HepG2 (cell line): ENCODE measurements at regions of chr19 and their contacts with region 1.

Region 1: DNA sequence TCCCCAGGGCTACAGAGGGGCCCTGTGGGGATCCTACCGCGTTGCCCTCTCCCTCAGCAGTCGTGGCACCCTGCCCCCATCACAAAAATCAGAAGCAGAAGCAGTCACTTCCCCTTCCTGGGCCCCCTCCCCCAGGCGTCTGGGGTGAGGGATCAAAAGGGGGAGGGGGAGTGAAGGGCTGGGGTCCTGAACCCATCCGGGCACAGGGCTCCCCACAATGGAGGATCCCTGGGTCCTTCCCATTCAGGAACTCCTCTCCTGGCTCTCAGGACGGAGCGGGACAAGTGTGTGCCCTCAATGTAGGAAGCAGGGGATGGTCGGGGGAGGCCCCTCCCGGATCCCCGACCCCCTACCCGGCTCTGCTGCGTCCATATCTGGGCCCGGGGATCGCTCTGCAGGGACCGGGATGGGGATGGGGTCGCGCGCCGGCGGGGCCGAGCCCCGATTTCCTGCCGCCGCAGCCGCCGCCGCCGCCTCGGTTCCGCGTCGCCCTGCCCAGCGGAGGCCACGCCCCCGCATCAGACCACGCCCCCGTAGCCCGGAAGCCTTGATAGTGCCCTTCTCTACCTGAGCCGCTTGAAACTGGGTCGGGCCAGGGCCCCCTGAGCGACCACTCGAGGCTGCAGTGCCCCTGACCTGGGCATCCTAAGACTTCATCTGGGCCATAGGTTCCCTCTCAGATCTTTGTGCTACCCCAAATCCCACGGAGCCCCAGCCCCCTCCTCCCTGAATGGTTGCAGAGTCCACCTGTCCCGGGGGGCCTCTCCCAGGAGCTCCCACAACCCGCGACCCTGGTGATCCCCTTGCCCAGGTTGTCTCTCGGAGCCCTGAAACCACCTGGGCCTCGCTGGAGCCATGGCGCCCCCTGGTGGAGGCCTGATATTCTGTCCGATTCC is at the start of gene GMIP:
- DNase-seq: peak; percentile 45
- ATAC-seq: peak; percentile 81
- H3K4me3 ChIP-seq: peak within 1 kb of the TSS; percentile 86 to 88 (median 88)
- H3K27ac ChIP-seq: peak within 1 kb of the TSS; percentile 15
- H3K4me1 ChIP-seq: no peaks in the 10 kb centered on the region
- H3K27me3 ChIP-seq: no peaks in the 10 kb centered on the region
- CTCF ChIP-seq: peak; percentile 85
- EP300 ChIP-seq: no peak
- POLR2A ChIP-seq: peak in 1 of 2 experiments; percentile 60; a peak in 2 of 4 replicates
- RAD21 ChIP-seq: peak; percentile 79
- total RNA-seq, gene GMIP: 1.3 and 1.8 TPM in 2 replicates

Region 2: GRCh38 chr19:19538061-19538784 is 105.2 kb before region 1 on chr19 and contains the start of gene CILP2:
- CTCF ChIA-PET with region 1: interaction called, 23 read pairs
- POLR2A ChIA-PET with region 1: no interaction called
- in situ Hi-C with region 1: loop called (anchors 5 kb)
- intact Hi-C with region 1: loop called (anchors 5 kb)
- DNase-seq: no peak
- ATAC-seq: peak; percentile 28
- H3K4me3 ChIP-seq: peak within 1 kb of the TSS; percentile 6 to 61 (median 16); a peak in 3 of 6 replicates
- H3K27ac ChIP-seq: no peak within 1 kb of the TSS
- H3K4me1 ChIP-seq: 0 out of 2 replicates have a peak, but pooled peaks cover 5% of the 10 kb centered on the region
- H3K27me3 ChIP-seq: peaks cover 0 to 9% of the 10 kb centered on the region in 2 experiments; a peak in 1 of 5 replicates
- CTCF ChIP-seq: 0 out of 2 replicates have a peak, but pooled peaks have one; percentile 6
- EP300 ChIP-seq: no peak
- POLR2A ChIP-seq: no peak
- RAD21 ChIP-seq: no peak
- total RNA-seq, gene CILP2: 0.09 TPM in 1 of 2 replicates, not detected in the other

Region 3: GRCh38 chr19:19618219-19619051 is 25.0 kb before region 1 on chr19 and contains the start of gene PBX4:
- CTCF ChIA-PET with region 1: no interaction called
- POLR2A ChIA-PET with region 1: no interaction called
- in situ Hi-C with region 1: no loop called
- intact Hi-C with region 1: no loop called
- DNase-seq: no peak
- ATAC-seq: no peak
- H3K4me3 ChIP-seq: no peak within 1 kb of the TSS
- H3K27ac ChIP-seq: no peak within 1 kb of the TSS
- H3K4me1 ChIP-seq: peaks cover 24% of the 10 kb centered on the region
- H3K27me3 ChIP-seq: peaks cover 0 to 3% of the 10 kb centered on the region in 2 experiments; a peak in 2 of 5 replicates
- CTCF ChIP-seq: no peak
- EP300 ChIP-seq: no peak
- POLR2A ChIP-seq: no peak
- RAD21 ChIP-seq: no peak
- total RNA-seq, gene PBX4: not detected in 2 replicates